ENCODE measurements at regions of chr4 and their contacts with region 1.

Region 1: GRCh38 chr4:8599657-8600056 is 7.1 kb downstream of the CPZ start:
- DNase-seq: no peak
- H3K4me3 ChIP-seq: no peak overlapping the region
- H3K27ac ChIP-seq: no peak overlapping the region
- H3K4me1 ChIP-seq: peaks cover 0 to 30% of the 10 kb centered on the region in 2 experiments; a peak in 1 of 4 replicates
- H3K27me3 ChIP-seq: no peaks in the 10 kb centered on the region
- CTCF ChIP-seq: no peak
- EP300 ChIP-seq: no peak
- RAD21 ChIP-seq: no peak

Region 2: GRCh38 chr4:8568068-8568680 is 31.5 kb before region 1 on chr4:
- CTCF ChIA-PET with region 1: no interaction called
- POLR2A ChIA-PET with region 1: no interaction called
- DNase-seq: no peak
- H3K4me3 ChIP-seq: no peak overlapping the region
- H3K27ac ChIP-seq: no peak overlapping the region
- H3K4me1 ChIP-seq: no peaks in the 10 kb centered on the region; a peak in 1 of 4 replicates
- H3K27me3 ChIP-seq: no peaks in the 10 kb centered on the region
- CTCF ChIP-seq: no peak
- EP300 ChIP-seq: no peak
- RAD21 ChIP-seq: no peak

Region 3: DNA sequence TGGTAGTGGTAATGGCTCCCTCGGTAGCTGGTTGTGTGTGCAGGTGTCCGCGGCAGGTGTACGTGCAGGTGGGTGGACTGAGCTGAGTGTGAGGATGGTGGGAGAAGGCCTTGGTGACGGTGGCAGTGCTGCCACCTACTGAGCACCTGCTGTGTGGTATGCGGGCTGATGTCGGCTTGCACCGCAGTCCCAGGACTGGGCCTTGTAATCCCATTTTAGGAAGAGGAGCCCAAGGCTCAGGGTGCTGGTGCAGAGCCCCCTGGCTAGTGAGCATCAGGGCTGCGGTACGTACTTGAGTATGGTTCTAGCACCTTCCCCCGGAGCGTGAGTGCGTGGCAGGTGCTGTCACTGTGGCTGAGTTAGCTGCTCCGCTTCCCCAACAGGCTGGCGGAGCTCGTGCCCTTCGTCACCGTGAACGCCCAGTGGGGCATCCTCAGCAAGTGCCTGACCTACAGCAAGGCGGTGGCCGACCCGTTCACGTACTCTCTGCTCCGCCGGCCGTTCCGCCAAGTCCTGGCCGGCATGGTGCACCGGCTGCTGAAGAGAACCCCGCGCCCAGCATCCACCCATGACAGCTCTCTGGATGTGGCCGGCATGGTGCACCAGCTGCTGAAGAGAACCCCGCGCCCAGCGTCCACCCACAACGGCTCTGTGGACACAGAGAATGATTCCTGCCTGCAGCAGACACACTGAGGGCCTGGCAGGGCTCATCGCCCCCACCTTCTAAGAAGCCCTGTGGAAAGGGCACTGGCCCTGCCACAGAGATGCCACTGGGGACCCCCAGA is 12.8 kb before region 1 on chr4:
- CTCF ChIA-PET with region 1: interaction called, 12 read pairs
- POLR2A ChIA-PET with region 1: no interaction called
- DNase-seq: no peak
- H3K4me3 ChIP-seq: no peak overlapping the region
- H3K27ac ChIP-seq: no peak overlapping the region
- H3K4me1 ChIP-seq: peaks cover 0 to 13% of the 10 kb centered on the region in 2 experiments; a peak in 1 of 4 replicates
- H3K27me3 ChIP-seq: no peaks in the 10 kb centered on the region; the same call in 1 of the 2 replicates
- CTCF ChIP-seq: no peak
- EP300 ChIP-seq: no peak
- RAD21 ChIP-seq: no peak